ENCODE measurements at regions of chr1 and their contacts with region 1.

Region 1: GRCh38 chr1:192951691-192952460 is 107.3 kb downstream of the UCHL5 start:
- DNase-seq: peak; percentile 15
- CTCF ChIP-seq: no peak

Region 2: DNA sequence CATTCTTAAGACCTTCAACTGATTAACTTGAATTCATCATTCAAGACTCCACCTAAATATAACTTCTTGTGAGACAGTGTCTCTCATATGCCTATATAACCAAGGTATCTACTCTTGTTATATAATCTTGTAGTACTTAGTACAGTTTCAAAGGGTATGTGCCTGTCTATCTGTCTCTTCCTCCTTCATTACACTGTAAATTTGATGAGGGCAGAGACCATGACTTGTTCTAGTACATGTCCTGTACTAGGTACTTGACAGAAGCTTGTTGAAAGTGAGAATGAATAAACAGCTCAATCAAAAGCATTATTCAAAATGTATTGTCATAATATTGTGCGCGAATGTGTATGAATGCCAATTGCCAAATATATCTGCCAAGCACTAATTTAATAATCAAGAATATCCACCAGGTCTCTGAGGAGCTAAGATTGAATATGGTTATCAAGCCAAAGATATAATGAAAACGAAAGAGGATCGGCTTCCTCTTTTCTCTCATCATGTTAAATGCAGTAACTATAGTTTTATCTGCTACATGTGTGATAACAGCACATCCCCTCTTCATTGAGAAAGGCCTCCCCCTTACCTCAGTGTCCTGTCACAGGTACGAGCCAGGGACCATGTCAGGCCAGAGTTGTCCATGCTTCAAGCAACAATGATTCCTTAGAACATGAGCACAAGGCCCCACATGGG is 10.0 kb before region 1 on chr1:
- CTCF ChIA-PET with region 1: interaction called, 16 read pairs
- POLR2A ChIA-PET with region 1: no interaction called
- DNase-seq: no peak
- CTCF ChIP-seq: no peak